A549 (cell line): ENCODE measurements at regions of chr1 and their contacts with region 1.

Region 1: GRCh38 chr1:89762779-89763648 is 57.8 kb upstream of the LRRC8D start:
- DNase-seq: peak; percentile 67 to 73
- ATAC-seq: peak; percentile 98 to 100
- H3K4me3 ChIP-seq: peak overlapping the region; percentile 43
- H3K27ac ChIP-seq: peak overlapping the region; percentile 38 to 39; a peak in 5 of 6 replicates
- H3K4me1 ChIP-seq: 0 out of 3 replicates have a peak, but pooled peaks cover 3% of the 10 kb centered on the region
- CTCF ChIP-seq: peak; percentile 76
- EP300 ChIP-seq: no peak
- POLR2A ChIP-seq: no peak
- RAD21 ChIP-seq: peak; percentile 92 to 93

Region 2: DNA sequence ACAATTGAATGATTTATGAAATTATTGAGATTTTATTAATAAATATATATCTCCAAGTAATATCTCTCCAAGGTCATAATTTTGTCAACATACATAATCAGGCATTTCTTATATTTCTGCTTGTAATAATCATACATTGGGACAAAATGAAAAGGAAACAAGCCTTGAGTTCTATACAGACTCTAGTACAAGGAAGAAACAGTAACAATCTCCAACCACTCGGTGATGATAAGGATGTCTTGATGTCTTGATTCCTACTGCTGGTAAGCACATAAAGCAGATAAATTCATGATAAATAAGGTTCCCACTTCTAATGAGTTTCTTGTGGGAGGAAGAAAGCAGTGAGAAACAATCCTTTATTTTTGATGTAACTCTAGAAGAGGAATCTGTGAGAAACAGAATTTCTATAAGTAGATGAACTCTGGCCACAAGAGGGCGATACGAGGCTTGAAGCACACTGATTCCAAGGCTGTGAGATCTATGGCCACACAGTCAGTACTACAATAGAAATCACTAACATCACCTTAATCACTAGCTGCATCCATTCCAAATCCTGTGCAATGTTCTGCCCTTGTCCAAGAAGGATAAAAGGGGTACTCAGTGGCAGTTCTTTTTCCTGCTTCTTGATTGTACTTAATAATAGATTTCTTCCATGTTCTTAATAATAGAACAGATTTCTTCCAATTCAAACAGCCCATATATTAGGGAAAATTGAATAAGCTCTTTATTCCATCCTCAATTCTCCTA is 279.8 kb before region 1 on chr1:
- CTCF ChIA-PET with region 1: interaction called, 42 read pairs
- POLR2A ChIA-PET with region 1: no interaction called
- DNase-seq: peak; percentile 33 to 77
- ATAC-seq: peak; percentile 92 to 95
- H3K4me3 ChIP-seq: no peak overlapping the region
- H3K27ac ChIP-seq: no peak overlapping the region
- H3K4me1 ChIP-seq: no peaks in the 10 kb centered on the region
- CTCF ChIP-seq: peak; percentile 75
- EP300 ChIP-seq: no peak
- POLR2A ChIP-seq: no peak
- RAD21 ChIP-seq: peak; percentile 70

Region 3: DNA sequence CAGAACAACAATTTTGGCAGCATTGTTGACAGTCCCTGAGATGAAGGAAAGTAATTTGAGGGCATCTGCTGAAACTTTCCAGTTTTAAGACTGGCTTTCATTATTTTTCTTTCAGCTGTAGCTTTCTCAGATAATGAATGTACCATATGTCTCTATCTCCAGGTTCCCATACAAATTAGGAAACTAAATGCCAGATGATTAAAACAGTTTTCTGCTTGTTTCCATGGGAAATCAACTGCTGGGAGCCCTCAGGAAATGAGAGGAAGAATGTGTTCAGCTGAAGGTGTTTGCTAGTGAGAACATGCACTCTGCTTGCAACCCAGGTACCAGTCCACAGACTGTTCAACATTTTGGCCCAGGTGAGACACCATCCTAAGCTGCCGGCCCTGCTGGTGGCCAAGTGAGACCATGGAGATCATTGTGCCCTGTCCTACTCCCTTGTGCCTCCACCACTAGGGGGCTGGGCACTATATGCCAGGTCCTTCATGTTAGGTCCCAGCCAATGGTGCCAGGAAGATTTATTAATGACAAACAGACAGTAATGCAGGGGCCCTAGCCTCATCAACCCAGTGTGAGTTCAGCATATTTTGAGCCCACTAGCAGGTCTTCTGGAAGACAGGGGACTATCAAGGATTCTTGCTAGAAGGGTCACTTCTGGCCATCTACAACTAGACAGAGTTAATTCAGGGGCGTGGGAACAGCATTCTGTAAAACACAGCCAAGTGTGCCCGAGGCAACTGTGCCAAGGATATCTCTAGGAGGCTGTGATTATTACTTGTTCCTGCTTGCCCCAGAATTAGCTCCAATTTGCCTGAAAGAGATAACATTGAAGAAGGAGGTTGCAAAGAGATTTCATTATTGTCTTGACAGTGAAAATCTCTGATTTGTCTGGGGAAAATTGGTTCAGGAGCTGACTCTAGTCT is 147.1 kb before region 1 on chr1:
- CTCF ChIA-PET with region 1: interaction called, 14 read pairs
- POLR2A ChIA-PET with region 1: no interaction called
- DNase-seq: peak in 1 of 2 experiments; percentile 34
- ATAC-seq: peak; percentile 85 to 90
- H3K4me3 ChIP-seq: no peak overlapping the region
- H3K27ac ChIP-seq: no peak overlapping the region
- H3K4me1 ChIP-seq: no peaks in the 10 kb centered on the region
- CTCF ChIP-seq: no peak; the same call in 2 of the 3 replicates
- EP300 ChIP-seq: no peak
- POLR2A ChIP-seq: no peak
- RAD21 ChIP-seq: peak in 1 of 2 experiments; percentile 16; a peak in 1 of 5 replicates

Region 4: GRCh38 chr1:89632657-89633247 is 130.3 kb before region 1 on chr1 and contains the start of gene LRRC8C:
- CTCF ChIA-PET with region 1: interaction called, 64 read pairs
- POLR2A ChIA-PET with region 1: interaction called, 5 read pairs
- DNase-seq: peak; percentile 47 to 69
- ATAC-seq: peak; percentile 90
- H3K4me3 ChIP-seq: peak within 1 kb of the TSS; percentile 76
- H3K27ac ChIP-seq: peak within 1 kb of the TSS; percentile 81 to 95
- H3K4me1 ChIP-seq: peaks cover 38% of the 10 kb centered on the region
- CTCF ChIP-seq: peak; percentile 53
- EP300 ChIP-seq: no peak
- POLR2A ChIP-seq: peak; percentile 59
- RAD21 ChIP-seq: peak in 1 of 2 experiments; percentile 77; a peak in 4 of 5 replicates
- polyA plus RNA-seq, gene LRRC8C: 14.7 and 15.9 TPM in 2 replicates

Region 5: DNA sequence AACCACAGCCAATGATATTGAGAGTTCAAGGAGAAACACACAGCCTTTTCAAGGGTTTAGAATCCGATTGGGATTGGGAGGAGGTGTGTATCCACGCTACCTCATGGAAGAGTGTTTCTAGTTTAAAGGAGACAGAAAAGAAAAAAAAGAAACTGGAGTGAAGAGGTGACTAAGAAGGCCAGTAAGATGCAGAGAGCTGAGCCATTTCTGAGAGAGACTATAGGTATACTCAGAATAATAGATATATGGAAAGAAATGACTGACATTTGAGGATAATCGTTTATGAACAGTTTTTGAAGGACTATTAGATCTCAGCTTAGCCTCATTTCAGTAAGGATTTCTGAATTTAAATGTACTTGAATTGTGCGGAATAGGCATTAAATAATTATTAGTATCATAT is 87.3 kb before region 1 on chr1:
- CTCF ChIA-PET with region 1: interaction called, 10 read pairs
- POLR2A ChIA-PET with region 1: no interaction called
- DNase-seq: no peak
- ATAC-seq: no peak
- H3K4me3 ChIP-seq: no peak overlapping the region
- H3K27ac ChIP-seq: no peak overlapping the region
- H3K4me1 ChIP-seq: peaks cover 32% of the 10 kb centered on the region
- CTCF ChIP-seq: no peak
- EP300 ChIP-seq: no peak
- POLR2A ChIP-seq: no peak
- RAD21 ChIP-seq: no peak

Region 6: GRCh38 chr1:89728381-89728780 is 34.6 kb before region 1 on chr1:
- CTCF ChIA-PET with region 1: interaction called, 12 read pairs
- POLR2A ChIA-PET with region 1: no interaction called
- DNase-seq: no peak
- ATAC-seq: no peak
- H3K4me3 ChIP-seq: no peak overlapping the region
- H3K27ac ChIP-seq: no peak overlapping the region
- H3K4me1 ChIP-seq: no peaks in the 10 kb centered on the region
- CTCF ChIP-seq: no peak
- EP300 ChIP-seq: no peak
- POLR2A ChIP-seq: no peak
- RAD21 ChIP-seq: no peak

Region 7: DNA sequence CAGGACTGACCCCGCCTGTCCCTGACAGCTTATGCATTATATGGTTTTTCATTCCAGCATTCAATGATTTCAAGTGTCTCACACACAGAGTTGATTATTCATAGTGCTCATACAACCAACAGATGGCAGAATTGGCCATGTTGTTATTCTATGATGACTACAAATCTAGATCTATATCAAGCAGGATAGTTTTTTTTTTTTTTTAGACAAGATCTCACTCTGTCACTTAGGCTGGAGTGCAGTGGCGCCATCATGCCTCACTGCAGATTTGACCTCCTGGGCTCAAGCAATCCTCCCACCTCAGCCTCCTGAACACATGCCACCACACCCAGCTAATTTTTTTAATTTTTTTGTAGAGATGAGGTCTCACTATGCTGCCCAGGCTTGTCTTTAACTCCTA is 17.7 kb after region 1 on chr1:
- CTCF ChIA-PET with region 1: interaction called, 11 read pairs
- POLR2A ChIA-PET with region 1: no interaction called
- DNase-seq: peak; percentile 56 to 69
- ATAC-seq: peak; percentile 90 to 98
- H3K4me3 ChIP-seq: no peak overlapping the region
- H3K27ac ChIP-seq: no peak overlapping the region
- H3K4me1 ChIP-seq: peaks cover 6% of the 10 kb centered on the region; the same call in 1 of the 3 replicates
- CTCF ChIP-seq: peak; percentile 55
- EP300 ChIP-seq: no peak
- POLR2A ChIP-seq: no peak
- RAD21 ChIP-seq: peak; percentile 67 to 74